Activated CD4-positive, alpha-beta T cell treated with anti-CD3 and anti-CD28 coated beads, Interleukin-2, amount 10 ng/mL, durations not matched to agents 24 days and 14 days (primary cell): ENCODE measurements at regions of chr3 and their contacts with region 1.

Region 1: GRCh38 chr3:42831321-42831713 is 22.1 kb downstream of the ACKR2 start:
- DNase-seq: peak; percentile 93
- H3K4me3 Mint-ChIP-seq: no peak overlapping the region
- H3K27ac Mint-ChIP-seq: no peak overlapping the region
- H3K4me1 Mint-ChIP-seq: peaks cover 9% of the 10 kb centered on the region
- H3K27me3 Mint-ChIP-seq: peaks cover 17% of the 10 kb centered on the region

Region 2: DNA sequence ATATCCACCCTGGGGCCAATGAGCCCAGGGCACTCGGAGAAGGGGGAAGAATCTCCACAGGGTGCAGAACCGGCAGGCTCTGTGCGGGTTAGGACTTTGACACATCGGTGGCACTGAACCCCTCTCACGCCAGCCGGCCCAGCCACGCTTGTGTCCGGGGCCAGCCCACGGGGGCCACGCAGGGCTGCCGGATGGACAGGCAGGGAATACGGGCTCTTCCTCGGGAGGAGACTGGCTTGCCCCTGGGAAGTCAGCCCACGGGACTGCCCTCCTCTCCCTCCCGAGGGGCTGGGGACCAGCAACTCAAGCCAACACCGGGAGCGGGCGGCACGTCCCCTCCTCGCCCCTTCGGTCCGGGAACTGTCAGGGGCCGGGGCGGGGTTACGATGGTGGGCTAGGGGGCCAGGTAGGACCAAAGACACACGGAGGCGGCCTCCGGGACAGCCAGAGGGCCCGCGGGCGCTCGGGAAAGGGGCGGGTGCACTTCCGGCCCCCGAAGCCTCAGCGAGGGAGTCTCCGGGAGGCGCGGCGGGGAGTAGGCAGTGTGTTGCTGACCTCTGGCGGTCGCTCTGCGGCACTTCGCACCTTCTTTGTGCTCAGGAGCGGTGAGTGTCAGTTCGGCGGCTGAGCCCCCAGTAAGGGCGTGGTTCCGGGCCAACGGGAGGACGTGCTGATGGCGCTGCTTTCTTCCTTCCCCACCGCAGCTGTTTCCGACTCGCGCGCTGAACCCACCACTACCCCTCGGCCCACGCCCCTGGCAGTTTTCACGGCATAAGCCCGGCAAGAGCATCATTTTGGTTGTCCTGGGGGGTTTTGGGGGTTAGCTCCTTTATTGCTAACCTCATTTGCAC is 49.5 kb after region 1 on chr3:
- intact Hi-C with region 1: loop called (anchors 1 kb)
- DNase-seq: peak; percentile 96
- H3K4me3 Mint-ChIP-seq: peak overlapping the region; percentile 87
- H3K27ac Mint-ChIP-seq: peak overlapping the region; percentile 85
- H3K4me1 Mint-ChIP-seq: peaks cover 11% of the 10 kb centered on the region
- H3K27me3 Mint-ChIP-seq: peaks cover 12% of the 10 kb centered on the region

Region 3: DNA sequence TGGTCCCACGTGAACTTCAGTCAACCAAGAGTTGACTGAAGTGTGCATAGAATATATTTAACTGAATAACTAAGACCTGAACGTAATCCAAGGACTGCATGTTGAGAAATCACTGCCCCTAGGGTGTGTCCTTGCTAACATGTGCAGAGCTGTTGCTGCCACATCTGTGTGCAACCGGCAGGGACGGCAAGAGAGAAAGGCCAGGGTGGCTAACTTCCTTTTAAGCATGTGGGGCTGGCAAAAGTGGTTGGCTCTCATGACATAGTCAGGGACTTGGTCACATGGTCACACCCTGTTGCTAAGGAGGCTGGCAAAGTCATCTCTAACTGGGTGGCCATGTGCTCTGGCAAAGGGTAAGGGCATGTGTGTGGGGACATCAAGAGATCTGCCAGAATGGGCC is 200.2 kb after region 1 on chr3:
- intact Hi-C with region 1: no loop called
- DNase-seq: no peak
- H3K4me3 Mint-ChIP-seq: no peak overlapping the region
- H3K27ac Mint-ChIP-seq: no peak overlapping the region
- H3K4me1 Mint-ChIP-seq: no peaks in the 10 kb centered on the region
- H3K27me3 Mint-ChIP-seq: peaks cover under 1% of the 10 kb centered on the region

Region 4: DNA sequence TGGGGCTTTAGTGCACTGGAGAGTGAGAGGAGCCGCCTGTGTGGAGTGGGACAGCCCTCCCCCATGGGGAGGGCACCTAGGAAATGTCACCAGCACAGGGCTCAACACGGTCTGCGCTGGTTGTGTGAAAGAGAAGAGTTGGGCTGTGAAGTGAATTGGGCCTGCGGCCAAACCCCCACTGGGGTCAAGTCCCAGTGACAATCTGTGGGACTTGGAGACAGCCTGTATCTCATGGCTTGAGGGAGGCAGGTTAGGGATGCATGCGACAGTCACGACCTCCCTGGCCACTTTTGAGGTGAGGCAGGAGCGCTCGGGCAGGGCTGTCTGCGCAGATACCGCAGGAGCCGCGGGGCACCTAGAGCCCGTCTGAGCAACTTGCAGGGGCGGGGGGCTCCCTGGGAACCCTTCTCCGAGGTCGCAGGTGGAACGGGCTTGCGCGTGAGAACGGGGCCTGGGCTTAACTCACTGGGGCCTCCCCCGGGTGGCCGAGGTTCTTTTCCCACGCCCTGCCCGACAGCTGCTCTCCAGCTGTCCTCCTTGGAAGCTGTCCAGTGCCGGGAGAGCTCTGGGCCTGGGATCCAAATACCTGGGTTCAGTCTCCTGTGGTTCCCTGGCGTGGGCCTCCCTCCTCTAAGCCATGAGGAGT is 532.4 kb after region 1 on chr3:
- intact Hi-C with region 1: no loop called
- DNase-seq: no peak
- H3K4me3 Mint-ChIP-seq: no peak overlapping the region
- H3K27ac Mint-ChIP-seq: no peak overlapping the region
- H3K4me1 Mint-ChIP-seq: no peaks in the 10 kb centered on the region
- H3K27me3 Mint-ChIP-seq: no peaks in the 10 kb centered on the region